GM10248 (cell line): ENCODE measurements at regions of chr17 and their contacts with region 1.

Region 1: DNA sequence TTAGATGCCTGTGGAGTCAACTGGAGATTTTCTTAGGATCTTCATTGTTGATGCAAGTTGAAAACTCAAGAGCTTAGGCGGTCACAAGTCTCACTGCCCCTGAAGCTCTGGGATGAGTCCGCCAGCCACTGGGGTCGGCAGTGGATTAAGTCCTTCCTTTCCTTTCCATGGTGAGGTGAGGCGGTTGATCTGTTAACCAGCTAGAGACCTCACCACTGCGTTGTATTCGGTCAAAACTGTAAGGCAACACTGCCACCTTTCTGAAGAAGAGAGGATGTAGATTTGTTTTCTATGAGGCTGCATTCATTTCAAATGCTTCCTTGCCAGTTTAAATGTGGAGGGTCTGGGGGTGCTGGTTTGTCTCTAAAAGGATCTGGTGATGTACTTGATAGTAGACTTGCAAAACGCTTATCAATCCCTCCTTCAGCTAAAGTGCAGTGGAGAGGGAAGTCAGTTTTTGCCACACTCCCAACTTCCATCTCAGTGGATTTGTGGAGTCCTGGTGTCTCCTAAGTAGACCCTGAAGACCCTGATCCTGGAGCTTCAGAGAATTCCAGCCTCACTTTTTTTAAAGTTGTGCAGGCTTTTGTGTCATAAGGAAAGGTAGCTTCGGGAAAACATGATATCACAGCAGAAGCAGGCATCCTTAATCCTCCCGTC is 1.7 kb downstream of the MYOCD start:
- DNase-seq: peak; percentile 32
- CTCF ChIP-seq: peak; percentile 42

Region 2: DNA sequence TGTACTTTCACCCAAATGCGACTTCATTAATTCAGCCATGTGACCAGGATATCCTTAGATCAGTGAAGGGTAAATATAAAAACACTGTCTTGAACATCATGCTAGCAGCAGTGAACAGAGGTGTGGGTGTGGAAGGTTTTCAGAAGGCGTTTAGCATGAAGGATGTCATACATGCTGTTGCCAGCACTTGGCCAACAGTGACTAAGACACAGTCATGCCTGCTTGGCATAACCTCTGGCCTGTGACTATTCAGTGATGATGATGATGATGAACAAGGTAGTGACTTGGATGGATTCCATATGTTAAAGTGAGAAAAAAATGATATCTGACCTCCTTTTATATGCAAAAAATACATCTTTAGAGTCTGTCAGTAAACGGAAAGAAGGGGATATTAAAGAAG is 548.8 kb before region 1 on chr17:
- CTCF ChIA-PET with region 1: no interaction called
- POLR2A ChIA-PET with region 1: interaction called, 10 read pairs
- DNase-seq: no peak
- CTCF ChIP-seq: no peak

Region 3: GRCh38 chr17:12180644-12181261 is 486.7 kb before region 1 on chr17:
- CTCF ChIA-PET with region 1: interaction called, 12 read pairs
- POLR2A ChIA-PET with region 1: no interaction called
- DNase-seq: peak; percentile 45
- CTCF ChIP-seq: peak; percentile 83

Region 4: DNA sequence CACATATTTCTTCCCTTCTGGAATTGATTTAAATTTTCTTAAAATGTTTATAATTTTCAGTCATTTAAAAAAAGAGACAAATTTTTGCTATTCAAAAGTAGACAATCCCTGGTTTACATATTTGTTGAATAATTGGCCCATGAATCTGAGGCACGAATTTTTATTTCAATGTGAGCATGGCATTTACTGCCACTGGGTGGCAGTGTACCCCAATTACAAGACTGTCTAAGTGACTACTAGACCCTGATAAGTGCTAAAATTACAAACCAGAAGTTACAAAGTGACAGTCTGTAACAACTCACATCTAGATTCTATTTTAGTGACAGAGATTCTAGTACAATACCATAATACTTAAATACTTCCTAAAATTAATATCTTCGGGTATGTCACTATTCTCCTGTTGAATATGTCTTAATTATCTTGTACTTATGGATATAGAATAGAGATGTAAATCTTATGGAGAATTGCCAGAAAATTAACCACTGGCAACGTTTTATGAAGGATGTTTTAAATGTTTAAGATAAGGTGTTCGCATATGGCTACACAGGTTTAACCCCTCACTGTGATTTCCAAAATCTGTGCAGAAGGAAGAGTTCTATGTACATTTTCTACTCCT is 410.9 kb before region 1 on chr17:
- CTCF ChIA-PET with region 1: interaction called, 24 read pairs
- POLR2A ChIA-PET with region 1: no interaction called
- DNase-seq: peak; percentile 47
- CTCF ChIP-seq: peak; percentile 75

Region 5: DNA sequence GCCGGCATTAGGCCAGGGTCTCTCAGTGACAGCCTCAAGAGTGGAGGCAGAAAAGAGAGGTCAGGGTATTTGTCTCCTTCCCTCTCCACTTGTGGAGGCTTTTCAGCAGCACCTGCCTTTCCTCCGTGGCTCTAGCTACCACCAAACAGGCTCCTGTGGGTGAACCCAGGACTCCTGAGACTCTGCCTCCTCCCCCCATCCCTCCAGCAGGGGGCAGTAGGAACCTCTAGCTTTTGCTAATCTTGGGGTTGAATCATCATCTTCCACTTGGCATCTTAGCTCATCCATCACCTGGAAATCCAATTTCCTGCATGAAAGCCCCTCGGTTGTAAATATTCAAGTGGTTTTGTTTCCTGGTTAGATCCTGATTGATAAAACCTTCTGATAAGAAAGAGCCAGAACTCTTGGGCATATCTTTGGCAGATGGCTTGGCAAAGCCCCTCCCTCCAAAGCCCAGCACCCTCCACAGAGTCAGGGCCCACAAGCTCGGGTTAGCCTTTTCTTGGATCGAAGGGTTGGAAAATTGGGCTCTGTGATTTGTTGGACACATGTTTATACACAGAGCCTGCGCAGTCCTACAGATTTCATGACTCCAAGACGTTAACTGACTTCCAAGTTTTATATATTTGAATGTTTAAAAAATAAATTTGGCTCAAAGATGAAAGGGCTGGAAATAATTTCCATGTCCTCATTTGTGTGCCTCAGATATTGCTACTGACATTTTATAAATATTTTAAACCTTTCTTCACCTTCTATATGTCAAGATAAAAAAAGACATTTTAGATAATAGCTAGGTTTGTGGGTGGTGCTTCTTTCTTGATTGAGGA is 324.6 kb before region 1 on chr17:
- CTCF ChIA-PET with region 1: interaction called, 16 read pairs
- POLR2A ChIA-PET with region 1: no interaction called
- DNase-seq: peak; percentile 52
- CTCF ChIP-seq: peak; percentile 30